Dendritic cell treated with granulocyte-macrophage colony-stimulating factor and Interleukin-4, amounts not matched to agents 40 ng/mL and 50 ng/mL, for 4 days (primary cell): ENCODE measurements at regions of chr2 and their contacts with region 1.

Region 1: DNA sequence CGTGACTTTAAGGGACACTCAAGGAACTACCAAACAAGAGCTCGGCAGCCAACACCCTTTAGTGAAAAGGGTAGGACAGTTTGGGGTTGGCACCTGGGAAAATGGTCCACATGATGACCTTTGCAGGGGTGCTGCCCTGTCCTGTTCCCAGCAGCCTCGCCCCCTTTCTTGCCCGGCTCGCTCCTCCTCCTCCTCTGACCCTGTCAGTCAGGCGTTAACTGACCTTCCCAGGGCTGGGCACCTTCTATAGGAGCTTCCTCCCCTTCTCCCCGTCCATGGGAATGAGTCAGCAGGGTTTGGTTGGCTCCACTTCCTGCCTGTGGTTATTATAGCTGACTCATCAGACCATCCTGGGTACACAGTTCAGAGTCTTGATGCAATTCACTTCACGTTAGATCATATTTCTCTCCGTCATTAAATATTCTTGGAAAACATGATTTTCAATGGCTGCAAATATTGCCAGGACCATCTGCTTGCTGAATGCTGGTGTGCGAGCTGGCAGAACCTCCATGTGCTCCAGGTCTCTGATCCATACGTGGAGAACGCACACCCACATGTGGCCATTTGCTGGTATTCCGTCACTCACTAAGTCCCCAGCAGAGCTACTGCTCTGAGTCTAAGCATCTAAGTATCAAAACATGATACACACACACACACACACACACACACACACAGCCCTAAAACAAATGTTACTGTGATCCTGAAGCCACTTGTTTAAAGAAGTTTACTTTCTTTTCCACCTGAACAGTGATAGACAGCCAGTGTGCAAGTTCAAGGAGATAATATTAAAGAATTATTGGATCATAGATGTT is 185.0 kb downstream of the ANAPC1 start:
- H3K4me3 Mint-ChIP-seq: peak overlapping the region; percentile 59
- H3K27ac Mint-ChIP-seq: peak overlapping the region; percentile 86
- H3K4me1 Mint-ChIP-seq: peaks cover 58% of the 10 kb centered on the region
- H3K27me3 Mint-ChIP-seq: peaks cover 3% of the 10 kb centered on the region

Region 2: GRCh38 chr2:111068453-111069058 is 630.4 kb before region 1 on chr2:
- intact Hi-C with region 1: no loop called
- H3K4me3 Mint-ChIP-seq: no peak overlapping the region
- H3K27ac Mint-ChIP-seq: no peak overlapping the region
- H3K4me1 Mint-ChIP-seq: peaks cover 23% of the 10 kb centered on the region
- H3K27me3 Mint-ChIP-seq: peaks cover 4% of the 10 kb centered on the region

Region 3: DNA sequence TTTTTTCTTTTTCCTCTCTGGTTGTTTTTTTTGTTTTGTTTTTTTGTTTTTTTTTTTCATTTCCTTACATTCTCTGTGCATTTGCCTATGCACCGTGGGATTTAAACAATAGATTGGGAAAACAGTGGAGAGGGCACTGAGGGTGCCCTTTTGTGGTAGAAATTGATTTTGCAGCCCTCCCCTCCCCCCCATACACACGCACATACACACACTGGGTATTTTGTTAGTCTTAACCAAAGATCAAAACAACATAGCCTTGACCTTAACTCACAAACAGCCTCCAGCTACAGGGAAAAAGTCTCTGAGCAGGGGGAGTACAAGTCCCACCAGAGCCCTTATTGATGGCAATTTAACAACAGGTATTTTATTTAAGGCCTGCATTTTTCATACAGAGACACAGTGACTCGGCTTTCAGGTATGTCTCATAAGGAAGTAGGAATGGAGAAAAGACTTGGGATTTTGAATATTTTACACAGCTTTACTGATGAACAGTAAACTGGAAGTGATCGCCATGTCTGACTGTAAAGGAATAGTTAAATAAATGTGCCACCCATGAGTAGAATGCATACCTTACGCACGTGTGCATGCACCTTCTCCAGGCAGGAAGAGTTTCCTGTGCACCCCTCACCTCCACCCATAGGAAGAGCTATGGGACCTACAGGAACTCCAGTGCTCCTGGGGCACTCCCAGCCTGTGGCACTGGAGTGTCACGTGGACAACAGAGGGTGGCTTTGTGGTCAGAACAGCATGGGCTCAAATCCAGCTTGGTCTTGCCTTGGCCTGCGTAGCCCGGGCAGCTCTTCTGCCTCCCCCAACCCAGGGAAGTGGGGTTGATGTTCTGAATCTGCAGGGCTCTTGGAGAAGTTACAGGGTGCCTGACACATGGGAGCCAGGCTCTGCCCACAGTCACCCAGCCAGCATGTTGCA is 81.4 kb before region 1 on chr2:
- intact Hi-C with region 1: loop called (anchors 5 kb)
- H3K4me3 Mint-ChIP-seq: no peak overlapping the region
- H3K27ac Mint-ChIP-seq: peak overlapping the region; percentile 52
- H3K4me1 Mint-ChIP-seq: peaks cover 38% of the 10 kb centered on the region
- H3K27me3 Mint-ChIP-seq: no peaks in the 10 kb centered on the region

Region 4: DNA sequence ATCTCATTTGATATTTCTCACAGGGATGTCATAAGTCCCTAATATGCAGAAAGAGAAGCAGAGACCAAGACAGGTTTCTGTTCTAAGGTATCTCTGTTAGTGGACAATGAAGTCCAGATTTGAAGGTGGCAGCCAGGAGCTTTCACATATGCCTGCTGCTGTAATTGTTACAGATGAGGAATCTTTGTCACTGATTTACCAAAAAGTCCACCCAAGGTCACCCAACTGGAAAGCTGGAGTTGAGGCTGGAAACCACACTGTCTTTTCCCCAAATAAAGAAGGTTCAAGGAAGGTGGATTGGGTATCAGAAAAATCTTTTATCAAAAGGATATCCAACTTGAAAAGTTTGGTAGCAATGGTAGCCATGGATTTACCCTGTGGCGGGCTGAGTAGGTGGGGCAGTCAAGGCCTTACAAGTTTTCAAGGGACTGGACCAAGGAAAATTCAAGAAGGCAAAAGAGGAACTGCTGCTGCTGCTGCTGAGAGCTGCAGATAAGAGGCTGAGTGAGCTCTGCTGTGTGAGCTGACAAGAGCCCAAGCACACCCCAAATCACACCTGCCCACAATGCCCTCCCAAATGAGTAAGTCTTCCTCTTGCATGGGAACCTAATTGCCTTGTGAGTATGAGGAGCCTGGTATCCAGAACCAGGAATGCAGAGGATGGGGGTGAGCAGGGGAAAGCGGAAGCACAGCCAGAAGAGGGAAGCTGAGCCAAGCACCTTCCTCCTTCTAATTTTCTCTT is 56.2 kb before region 1 on chr2:
- intact Hi-C with region 1: loop called (anchors 5 kb)
- H3K4me3 Mint-ChIP-seq: no peak overlapping the region
- H3K27ac Mint-ChIP-seq: peak overlapping the region; percentile 76
- H3K4me1 Mint-ChIP-seq: peaks cover 34% of the 10 kb centered on the region
- H3K27me3 Mint-ChIP-seq: no peaks in the 10 kb centered on the region

Region 5: DNA sequence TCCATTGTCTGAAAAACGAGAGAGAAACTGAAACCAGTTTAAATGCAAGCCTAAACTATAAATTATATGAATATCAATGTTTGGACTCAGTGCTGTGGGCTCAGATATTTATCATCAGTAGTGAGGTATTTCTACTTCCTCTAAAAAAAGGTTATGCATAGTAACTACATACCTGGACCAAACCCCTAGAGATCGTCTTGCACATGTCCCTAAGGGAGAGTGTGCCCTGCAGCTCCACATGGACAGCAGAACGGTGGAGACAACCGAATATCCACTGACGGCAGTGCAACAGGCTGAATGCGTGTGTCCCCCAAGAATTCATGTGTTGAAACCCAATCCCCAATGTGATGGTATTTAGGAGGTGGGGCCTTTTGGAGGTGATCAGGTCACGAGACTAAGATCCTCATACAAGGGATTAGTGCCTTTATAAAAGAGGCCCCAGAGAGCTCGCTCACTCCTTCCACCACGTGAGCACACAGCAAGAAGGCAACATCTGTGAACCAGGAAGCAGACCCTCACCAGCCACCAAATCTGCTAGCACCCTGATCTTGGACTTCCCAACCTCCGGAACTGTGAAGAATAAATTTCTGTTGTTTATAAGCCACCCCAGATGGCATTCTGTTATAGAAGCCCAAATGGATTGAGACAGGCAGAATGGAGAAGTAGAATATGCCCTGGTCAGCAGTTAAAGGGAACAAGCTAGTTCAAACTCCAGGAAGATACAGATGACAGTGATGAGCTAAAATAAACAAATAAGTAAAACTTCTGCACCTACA is 23.3 kb before region 1 on chr2:
- intact Hi-C with region 1: loop called (anchors 2 kb)
- H3K4me3 Mint-ChIP-seq: no peak overlapping the region
- H3K27ac Mint-ChIP-seq: peak overlapping the region; percentile 92
- H3K4me1 Mint-ChIP-seq: peaks cover 65% of the 10 kb centered on the region
- H3K27me3 Mint-ChIP-seq: peaks cover 2% of the 10 kb centered on the region

Region 6: DNA sequence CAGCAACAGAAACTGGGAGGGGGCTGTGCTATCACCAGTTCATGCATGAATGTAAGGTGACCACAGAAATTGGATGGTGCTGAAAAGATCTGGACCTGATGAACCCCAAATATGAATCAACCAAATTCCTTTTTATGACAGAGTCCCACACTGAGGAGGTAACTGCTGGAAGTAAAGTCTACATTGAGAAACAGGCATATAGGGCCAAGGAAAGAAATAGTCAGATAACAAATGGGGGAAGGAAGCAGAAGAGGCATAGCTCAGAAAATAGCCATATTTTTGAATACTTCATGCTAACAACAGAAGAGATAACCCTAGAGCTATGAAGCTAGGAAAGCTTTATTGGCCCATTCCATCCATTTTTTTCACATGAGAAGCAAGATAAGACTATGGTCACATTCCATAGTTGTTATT is 602.2 kb after region 1 on chr2:
- intact Hi-C with region 1: no loop called
- H3K4me3 Mint-ChIP-seq: no peak overlapping the region
- H3K27ac Mint-ChIP-seq: no peak overlapping the region
- H3K4me1 Mint-ChIP-seq: no peaks in the 10 kb centered on the region
- H3K27me3 Mint-ChIP-seq: no peaks in the 10 kb centered on the region